ENCODE measurements at regions of chr10 and their contacts with region 1.

Region 1: GRCh38 chr10:70815504-70816219 is at the start of gene SGPL1:
- DNase-seq: peak; percentile 83
- H3K4me3 Mint-ChIP-seq: peak within 1 kb of the TSS; percentile 80
- H3K27ac Mint-ChIP-seq: peak within 1 kb of the TSS; percentile 56
- H3K4me1 Mint-ChIP-seq: peaks cover 22% of the 10 kb centered on the region
- H3K27me3 Mint-ChIP-seq: peaks cover 10% of the 10 kb centered on the region

Region 2: GRCh38 chr10:70312972-70313371 is 502.7 kb before region 1 on chr10:
- CTCF ChIA-PET with region 1: no interaction called
- DNase-seq: no peak
- H3K4me3 Mint-ChIP-seq: no peak overlapping the region
- H3K27ac Mint-ChIP-seq: no peak overlapping the region
- H3K4me1 Mint-ChIP-seq: no peaks in the 10 kb centered on the region
- H3K27me3 Mint-ChIP-seq: no peaks in the 10 kb centered on the region

Region 3: DNA sequence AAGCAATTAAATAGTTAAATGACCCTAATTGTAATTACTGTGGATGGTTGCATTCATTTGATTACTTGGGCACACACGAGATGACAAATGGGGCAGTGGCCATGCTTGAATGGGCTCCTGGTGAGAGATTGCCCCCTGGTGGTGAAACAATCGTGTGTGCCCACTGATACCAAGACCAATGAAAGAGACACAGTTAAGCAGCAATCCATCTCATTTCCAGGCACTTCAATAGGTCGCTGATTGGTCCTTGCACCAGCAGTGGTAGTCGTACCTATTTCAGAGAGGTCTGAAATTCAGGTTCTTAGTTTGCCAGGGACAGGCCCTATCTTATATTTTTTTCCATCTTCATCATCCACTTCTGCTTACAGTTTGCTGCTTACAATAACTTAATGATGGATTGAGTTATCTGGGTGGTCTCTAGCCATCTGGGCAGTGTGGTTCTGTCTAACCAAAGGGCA is 64.4 kb after region 1 on chr10:
- CTCF ChIA-PET with region 1: interaction called, 24 read pairs
- DNase-seq: peak; percentile 84
- H3K4me3 Mint-ChIP-seq: no peak overlapping the region
- H3K27ac Mint-ChIP-seq: no peak overlapping the region
- H3K4me1 Mint-ChIP-seq: no peaks in the 10 kb centered on the region
- H3K27me3 Mint-ChIP-seq: no peaks in the 10 kb centered on the region